ENCODE measurements at regions of chr11 and their contacts with region 1.

Region 1: GRCh38 chr11:116853461-116854073 is 16.1 kb upstream of the APOA1 start:
- DNase-seq: peak; percentile 78
- H3K4me3 Mint-ChIP-seq: peak overlapping the region; percentile 53
- H3K27ac Mint-ChIP-seq: peak overlapping the region; percentile 89
- H3K4me1 Mint-ChIP-seq: peaks cover 74% of the 10 kb centered on the region
- H3K27me3 Mint-ChIP-seq: no peaks in the 10 kb centered on the region

Region 2: DNA sequence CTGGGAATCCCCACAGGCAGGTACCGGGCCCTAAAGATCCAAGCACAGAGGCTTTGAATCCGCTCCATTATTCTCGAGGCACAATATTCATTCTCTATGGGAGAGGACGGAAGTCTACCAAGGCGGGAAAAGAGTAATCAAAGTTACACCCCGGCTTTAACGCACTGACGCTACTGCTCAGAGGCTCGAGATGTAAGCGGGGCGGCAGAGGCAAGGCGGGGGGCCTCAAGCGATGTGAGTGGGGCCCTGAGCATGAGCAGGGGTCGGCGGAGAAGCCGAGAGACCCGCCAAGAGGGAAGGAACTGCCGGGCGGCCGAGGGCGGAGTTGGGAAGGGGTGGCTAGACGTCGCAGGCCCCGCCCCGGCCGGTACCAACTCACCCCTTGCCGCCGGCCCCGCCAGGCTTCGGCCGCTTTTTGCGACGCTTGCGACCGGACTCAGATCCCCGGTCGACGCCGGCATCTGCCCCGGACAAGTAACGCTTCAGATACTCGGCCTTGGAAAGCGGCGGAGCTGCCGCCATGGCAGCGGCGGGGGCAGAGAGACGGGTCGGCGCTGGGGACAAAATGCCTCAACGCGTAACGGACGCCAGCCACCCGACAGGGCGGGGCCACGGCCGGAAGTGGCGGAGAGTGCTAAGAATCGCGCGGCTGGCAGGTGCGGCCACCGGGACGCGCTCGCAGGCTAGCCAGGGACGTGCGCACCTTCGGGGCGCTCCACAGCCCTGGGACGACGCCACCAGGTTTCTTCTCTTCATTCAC is 80.9 kb before region 1 on chr11 and contains the start of gene BUD13:
- CTCF ChIA-PET with region 1: no interaction called
- POLR2A ChIA-PET with region 1: interaction called, 4 read pairs
- intact Hi-C with region 1: loop called (anchors 1 kb)
- DNase-seq: peak; percentile 96
- H3K4me3 Mint-ChIP-seq: peak within 1 kb of the TSS; percentile 99
- H3K27ac Mint-ChIP-seq: peak within 1 kb of the TSS; percentile 95
- H3K4me1 Mint-ChIP-seq: peaks cover 55% of the 10 kb centered on the region
- H3K27me3 Mint-ChIP-seq: no peaks in the 10 kb centered on the region
- total RNA-seq, gene BUD13: 30.3 to 32.7 TPM

Region 3: DNA sequence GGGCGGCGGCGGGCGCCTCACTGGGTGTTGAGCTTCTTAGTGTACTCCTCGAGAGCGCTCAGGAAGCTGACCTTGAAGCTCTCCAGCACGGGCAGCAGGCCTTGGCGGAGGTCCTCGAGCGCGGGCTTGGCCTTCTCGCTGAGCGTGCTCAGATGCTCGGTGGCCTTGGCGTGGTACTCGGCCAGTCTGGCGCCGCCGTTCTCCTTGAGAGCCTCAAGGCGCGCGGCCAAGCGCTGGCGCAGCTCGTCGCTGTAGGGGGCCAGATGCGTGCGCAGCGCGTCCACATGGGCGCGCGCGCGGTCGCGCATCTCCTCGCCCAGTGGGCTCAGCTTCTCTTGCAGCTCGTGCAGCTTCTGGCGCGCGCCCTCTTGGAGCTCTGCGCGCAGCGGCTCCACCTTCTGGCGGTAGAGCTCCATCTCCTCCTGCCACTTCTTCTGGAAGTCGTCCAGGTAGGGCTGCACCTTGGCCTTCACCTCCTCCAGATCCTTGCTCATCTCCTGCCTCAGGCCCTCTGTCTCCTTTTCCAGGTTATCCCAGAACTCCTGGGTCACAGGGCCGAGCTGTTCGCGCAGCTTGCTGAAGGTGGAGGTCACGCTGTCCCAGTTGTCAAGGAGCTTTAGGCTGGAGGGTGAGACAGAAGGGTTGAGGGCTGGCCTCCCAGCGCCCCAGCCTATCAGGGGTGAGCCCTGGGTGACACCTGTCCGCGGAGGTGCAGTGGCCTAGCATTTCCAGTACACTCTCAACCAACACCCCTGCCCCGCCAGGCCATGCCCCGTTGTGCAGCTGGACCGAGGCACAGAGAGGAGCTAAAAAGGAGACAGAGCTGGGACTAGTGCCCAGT is 17.6 kb before region 1 on chr11:
- CTCF ChIA-PET with region 1: interaction called, 41 read pairs
- POLR2A ChIA-PET with region 1: interaction called, 7 read pairs
- intact Hi-C with region 1: no loop called
- DNase-seq: peak; percentile 88
- H3K4me3 Mint-ChIP-seq: peak overlapping the region; percentile 63
- H3K27ac Mint-ChIP-seq: no peak overlapping the region
- H3K4me1 Mint-ChIP-seq: peaks cover 12% of the 10 kb centered on the region
- H3K27me3 Mint-ChIP-seq: no peaks in the 10 kb centered on the region

Region 4: DNA sequence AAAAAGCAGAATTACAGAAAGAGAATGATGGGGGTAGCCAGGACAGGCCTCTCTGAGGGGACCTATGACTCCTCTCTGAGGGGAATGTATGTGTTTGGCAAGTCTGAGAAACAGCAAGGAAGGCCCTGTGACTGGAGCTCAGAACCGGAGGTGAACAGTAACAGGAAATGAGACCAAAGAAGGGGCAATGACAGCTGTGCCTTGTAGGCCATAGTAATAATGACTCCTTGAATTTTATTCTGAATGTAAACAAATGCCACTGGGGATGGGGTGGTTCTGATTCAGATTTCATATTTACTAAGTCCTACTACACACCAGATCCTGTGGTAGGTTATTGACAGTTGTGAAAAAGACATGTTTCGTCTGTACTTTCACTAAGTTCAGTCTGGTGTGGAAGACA is 36.6 kb after region 1 on chr11:
- CTCF ChIA-PET with region 1: interaction called, 3 read pairs
- POLR2A ChIA-PET with region 1: no interaction called
- intact Hi-C with region 1: loop called (anchors 1 kb)
- DNase-seq: peak; percentile 57
- H3K4me3 Mint-ChIP-seq: no peak overlapping the region
- H3K27ac Mint-ChIP-seq: peak overlapping the region; percentile 62
- H3K4me1 Mint-ChIP-seq: peaks cover 20% of the 10 kb centered on the region
- H3K27me3 Mint-ChIP-seq: no peaks in the 10 kb centered on the region

Region 5: DNA sequence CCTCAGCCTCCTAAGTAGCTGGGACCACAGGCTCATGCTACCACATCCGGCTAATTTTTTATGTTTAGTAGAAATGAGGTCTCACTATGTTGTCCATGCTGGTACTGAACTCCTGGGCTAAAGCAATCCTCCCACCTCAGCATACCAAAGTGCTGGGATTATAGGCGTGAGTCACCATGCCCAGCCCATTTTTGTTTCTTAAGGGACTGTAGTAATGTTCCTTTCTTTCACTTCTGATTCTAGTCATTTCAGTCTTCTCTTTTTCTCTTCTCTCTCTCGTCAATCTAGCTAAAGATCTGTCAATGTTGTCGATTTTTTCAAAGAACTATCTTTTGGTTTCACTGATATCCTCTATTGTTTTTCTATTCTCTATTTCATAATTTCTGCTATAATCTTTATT is 94.8 kb after region 1 on chr11:
- CTCF ChIA-PET with region 1: no interaction called
- POLR2A ChIA-PET with region 1: no interaction called
- intact Hi-C with region 1: loop called (anchors 5 kb)
- DNase-seq: peak; percentile 68
- H3K4me3 Mint-ChIP-seq: no peak overlapping the region
- H3K27ac Mint-ChIP-seq: no peak overlapping the region
- H3K4me1 Mint-ChIP-seq: peaks cover 41% of the 10 kb centered on the region
- H3K27me3 Mint-ChIP-seq: no peaks in the 10 kb centered on the region

Region 6: DNA sequence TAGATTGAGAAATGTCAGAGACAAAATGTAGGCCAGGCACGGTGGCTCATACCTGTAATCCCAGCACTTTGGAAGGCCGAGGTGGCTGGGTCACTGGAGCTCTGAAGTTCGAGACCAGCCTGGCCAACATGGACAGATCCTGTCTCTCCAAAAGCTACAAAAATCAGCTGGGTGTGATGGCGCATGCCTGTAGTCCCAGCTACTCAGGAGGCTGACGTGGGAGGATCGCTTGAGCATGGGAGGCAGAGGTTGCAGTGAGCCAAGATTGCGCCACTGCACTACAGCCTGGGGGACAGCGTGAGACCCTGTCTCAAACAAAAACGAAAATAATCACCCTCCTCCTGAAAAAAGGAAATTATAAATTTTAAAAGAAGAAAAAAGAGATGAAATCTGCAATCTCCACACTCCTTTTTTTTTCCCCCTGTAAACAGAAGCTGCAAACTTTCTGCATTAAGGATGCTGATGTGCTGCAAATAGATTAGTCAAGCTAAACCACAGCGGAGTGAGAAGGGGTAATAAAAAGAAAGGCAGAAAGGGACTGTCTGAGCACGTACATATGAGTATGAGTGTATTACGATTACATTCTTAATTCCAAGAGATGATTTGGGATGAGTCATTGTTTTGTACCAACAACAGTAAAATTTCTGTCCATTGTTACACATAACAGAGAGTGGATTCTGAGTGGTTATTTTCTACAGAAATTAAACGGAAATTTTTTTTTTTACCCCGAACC is 157.4 kb after region 1 on chr11:
- CTCF ChIA-PET with region 1: interaction called, 3 read pairs
- POLR2A ChIA-PET with region 1: interaction called, 11 read pairs
- intact Hi-C with region 1: no loop called
- DNase-seq: no peak
- H3K4me3 Mint-ChIP-seq: no peak overlapping the region
- H3K27ac Mint-ChIP-seq: peak overlapping the region; percentile 84
- H3K4me1 Mint-ChIP-seq: peaks cover 51% of the 10 kb centered on the region
- H3K27me3 Mint-ChIP-seq: no peaks in the 10 kb centered on the region

Region 7: GRCh38 chr11:117092951-117093590 is 239.5 kb after region 1 on chr11:
- CTCF ChIA-PET with region 1: interaction called, 4 read pairs
- POLR2A ChIA-PET with region 1: interaction called, 4 read pairs
- intact Hi-C with region 1: loop called (anchors 1 kb)
- DNase-seq: no peak
- H3K4me3 Mint-ChIP-seq: peak overlapping the region; percentile 40
- H3K27ac Mint-ChIP-seq: peak overlapping the region; percentile 73
- H3K4me1 Mint-ChIP-seq: peaks cover 75% of the 10 kb centered on the region
- H3K27me3 Mint-ChIP-seq: no peaks in the 10 kb centered on the region

Region 8: GRCh38 chr11:117171404-117172061 is 318.0 kb after region 1 on chr11:
- CTCF ChIA-PET with region 1: no interaction called
- POLR2A ChIA-PET with region 1: no interaction called
- intact Hi-C with region 1: no loop called
- DNase-seq: no peak
- H3K4me3 Mint-ChIP-seq: no peak overlapping the region
- H3K27ac Mint-ChIP-seq: peak overlapping the region; percentile 4
- H3K4me1 Mint-ChIP-seq: peaks cover 5% of the 10 kb centered on the region
- H3K27me3 Mint-ChIP-seq: no peaks in the 10 kb centered on the region